Breast epithelium (tissue), 4 donors: ENCODE measurements at regions of chr12 and their contacts with region 1.

Region 1: DNA sequence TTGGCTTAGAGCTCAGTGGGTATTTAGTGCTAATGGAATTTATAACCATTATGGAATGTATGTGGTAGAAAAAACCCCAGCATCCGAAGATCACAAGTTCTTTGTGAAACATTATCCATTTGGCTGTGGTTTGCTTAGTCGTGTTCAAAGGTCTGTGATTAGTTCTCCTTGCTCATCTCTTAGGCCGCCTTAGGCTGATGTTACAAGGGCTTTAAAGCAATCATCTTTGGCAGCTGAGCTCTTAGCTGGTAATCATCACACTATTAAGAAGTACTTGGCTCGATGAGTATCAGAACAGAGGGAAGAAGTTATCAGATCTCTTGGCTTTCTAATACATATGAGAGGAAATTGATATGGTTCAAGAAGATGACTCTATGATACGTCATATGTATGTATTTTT is 124.1 kb upstream of the E2F7 start:
- DNase-seq: no peak
- H3K4me3 ChIP-seq: no peak overlapping the region
- H3K27ac ChIP-seq: no peak overlapping the region
- H3K4me1 ChIP-seq: no peaks in the 10 kb centered on the region
- H3K27me3 ChIP-seq: no peaks in the 10 kb centered on the region
- CTCF ChIP-seq: no peak
- POLR2A ChIP-seq: no peak

Region 2: GRCh38 chr12:75404231-75404630 is 1785.2 kb before region 1 on chr12:
- intact Hi-C with region 1: loop called (anchors 10 kb)
- DNase-seq: no peak
- H3K4me3 ChIP-seq: no peak overlapping the region
- H3K27ac ChIP-seq: no peak overlapping the region
- H3K4me1 ChIP-seq: no peaks in the 10 kb centered on the region
- H3K27me3 ChIP-seq: no peaks in the 10 kb centered on the region
- CTCF ChIP-seq: no peak
- POLR2A ChIP-seq: no peak

Region 3: DNA sequence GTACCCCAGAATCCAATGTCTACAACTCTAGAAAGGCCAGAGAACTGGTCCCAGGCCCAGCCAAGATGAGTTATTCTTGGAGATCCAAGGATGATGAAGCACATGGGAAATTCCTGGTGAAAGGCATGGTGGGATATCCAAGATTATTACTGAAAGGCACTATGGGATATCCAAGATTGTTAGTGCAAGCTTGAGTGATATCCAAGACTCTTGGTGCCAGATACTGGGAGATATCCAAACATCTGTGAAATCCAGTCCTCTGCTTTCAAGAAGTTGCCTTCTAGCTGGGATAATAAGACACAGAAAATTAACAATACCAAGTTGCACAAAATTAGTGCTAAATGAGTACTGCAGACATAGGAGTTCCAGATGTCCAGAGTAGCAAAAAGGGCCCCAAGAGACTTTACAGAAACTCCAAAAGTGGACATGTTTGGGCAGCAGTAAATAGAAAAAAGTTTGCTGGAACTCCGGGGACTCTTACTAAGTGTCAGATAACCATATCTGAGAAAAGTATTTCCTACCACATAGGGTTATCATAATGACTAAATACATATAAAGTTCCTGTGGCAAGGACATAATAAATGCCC is 1192.5 kb before region 1 on chr12:
- intact Hi-C with region 1: no loop called
- DNase-seq: no peak
- H3K4me3 ChIP-seq: no peak overlapping the region
- H3K27ac ChIP-seq: no peak overlapping the region
- H3K4me1 ChIP-seq: no peaks in the 10 kb centered on the region
- H3K27me3 ChIP-seq: no peaks in the 10 kb centered on the region
- CTCF ChIP-seq: no peak
- POLR2A ChIP-seq: no peak

Region 4: GRCh38 chr12:77625441-77625840 is 436.0 kb after region 1 on chr12:
- intact Hi-C with region 1: no loop called
- DNase-seq: no peak
- H3K4me3 ChIP-seq: no peak overlapping the region
- H3K27ac ChIP-seq: no peak overlapping the region
- H3K4me1 ChIP-seq: no peaks in the 10 kb centered on the region
- H3K27me3 ChIP-seq: no peaks in the 10 kb centered on the region
- CTCF ChIP-seq: no peak
- POLR2A ChIP-seq: no peak

Region 5: GRCh38 chr12:78756936-78757335 is 1567.5 kb after region 1 on chr12:
- intact Hi-C with region 1: no loop called
- DNase-seq: no peak
- H3K4me3 ChIP-seq: no peak overlapping the region
- H3K27ac ChIP-seq: no peak overlapping the region
- H3K4me1 ChIP-seq: no peaks in the 10 kb centered on the region
- H3K27me3 ChIP-seq: no peaks in the 10 kb centered on the region
- CTCF ChIP-seq: no peak
- POLR2A ChIP-seq: no peak